Panc1 (cell line): ENCODE measurements at regions of chr4 and their contacts with region 1.

Region 1: GRCh38 chr4:112099701-112100297 is 45.5 kb upstream of the FAM241A start:
- DNase-seq: peak; percentile 48
- ATAC-seq: peak; percentile 89
- H3K4me3 ChIP-seq: no peak overlapping the region
- H3K27ac ChIP-seq: no peak overlapping the region
- H3K4me1 ChIP-seq: no peaks in the 10 kb centered on the region
- H3K27me3 ChIP-seq: no peaks in the 10 kb centered on the region
- CTCF ChIP-seq: peak; percentile 49; the same call in 1 of the 2 replicates

Region 2: GRCh38 chr4:112234952-112235609 is 135.3 kb after region 1 on chr4:
- CTCF ChIA-PET with region 1: no interaction called
- POLR2A ChIA-PET with region 1: no interaction called
- in situ Hi-C with region 1: no loop called
- intact Hi-C with region 1: loop called (anchors 1 kb)
- DNase-seq: peak; percentile 50
- ATAC-seq: no peak
- H3K4me3 ChIP-seq: no peak overlapping the region
- H3K27ac ChIP-seq: no peak overlapping the region
- H3K4me1 ChIP-seq: no peaks in the 10 kb centered on the region; the same call in 1 of the 2 replicates
- H3K27me3 ChIP-seq: no peaks in the 10 kb centered on the region
- CTCF ChIP-seq: peak; percentile 64; the same call in 1 of the 2 replicates

Region 3: DNA sequence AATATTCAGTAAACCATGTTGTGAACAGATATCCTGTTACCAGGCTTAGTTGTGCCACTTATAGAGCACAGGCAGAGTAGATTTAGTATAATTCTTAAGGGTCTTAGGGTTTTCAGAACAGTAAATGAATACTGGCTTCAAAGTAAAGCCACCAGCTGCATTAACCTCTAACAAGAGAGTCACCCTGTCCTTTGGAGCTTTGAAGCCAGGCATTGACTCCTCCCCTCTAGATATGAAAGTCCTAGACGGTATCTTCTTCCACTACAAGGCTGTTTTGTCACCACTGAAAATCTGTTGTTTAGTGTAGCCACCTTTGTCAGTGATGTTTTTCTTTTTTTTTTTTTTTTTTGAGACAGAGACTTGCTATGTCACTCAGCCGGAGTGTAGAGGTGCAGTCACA is 275.1 kb after region 1 on chr4:
- CTCF ChIA-PET with region 1: interaction called, 11 read pairs
- POLR2A ChIA-PET with region 1: no interaction called
- in situ Hi-C with region 1: no loop called
- intact Hi-C with region 1: no loop called
- DNase-seq: no peak
- ATAC-seq: no peak
- H3K4me3 ChIP-seq: no peak overlapping the region
- H3K27ac ChIP-seq: no peak overlapping the region
- H3K4me1 ChIP-seq: no peaks in the 10 kb centered on the region
- H3K27me3 ChIP-seq: no peaks in the 10 kb centered on the region
- CTCF ChIP-seq: no peak